ENCODE measurements at regions of chr9 and their contacts with region 1.

Region 1: DNA sequence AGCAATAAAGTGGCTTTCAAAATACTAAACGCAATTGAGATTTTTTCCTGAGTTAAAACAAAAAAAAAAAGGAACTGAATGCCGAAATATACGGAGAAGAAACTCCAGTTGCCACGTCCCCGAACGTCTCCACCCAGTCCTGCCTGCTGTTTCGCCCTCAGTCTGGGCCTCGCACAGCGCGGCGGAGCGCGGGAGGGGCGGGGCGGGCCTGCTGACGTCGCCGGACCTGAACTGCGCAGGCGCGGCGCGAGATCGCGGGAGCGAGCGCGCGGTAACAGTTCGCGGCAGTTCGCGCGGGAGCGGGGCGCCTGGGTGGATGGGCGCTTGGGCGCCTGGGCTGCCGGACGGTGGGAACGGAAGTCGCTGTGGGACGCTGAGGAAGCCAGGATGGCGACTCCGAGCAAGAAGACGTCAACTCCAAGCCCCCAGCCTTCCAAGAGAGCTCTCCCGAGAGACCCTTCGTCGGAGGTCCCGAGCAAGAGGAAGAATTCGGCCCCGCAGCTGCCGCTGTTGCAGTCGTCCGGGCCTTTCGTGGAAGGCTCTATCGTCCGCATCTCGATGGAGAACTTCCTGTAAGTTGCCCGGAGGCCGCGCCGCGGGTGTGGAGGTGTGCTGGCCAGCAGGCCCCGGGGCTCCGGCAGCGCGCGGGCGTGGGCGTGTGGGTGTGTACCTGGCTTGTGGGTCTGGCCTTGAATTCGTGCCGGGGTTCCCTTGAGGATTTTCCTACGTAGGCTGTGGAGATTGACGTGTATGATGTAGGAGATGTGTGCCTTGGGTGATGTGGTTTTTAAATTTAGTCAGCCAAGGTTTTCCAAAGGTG is at the start of gene SMC5:
- DNase-seq: peak; percentile 72 to 95
- H3K4me3 ChIP-seq: peak within 1 kb of the TSS; percentile 75
- H3K27ac ChIP-seq: peak within 1 kb of the TSS; percentile 89
- H3K4me1 ChIP-seq: peaks cover 68% of the 10 kb centered on the region
- H3K27me3 ChIP-seq: no peaks in the 10 kb centered on the region
- CTCF ChIP-seq: no peak
- total RNA-seq, gene SMC5: 34.4 and 41.9 TPM in 2 replicates

Region 2: GRCh38 chr9:69759421-69760277 is 499.3 kb before region 1 on chr9 and contains the start of gene PTAR1:
- CTCF ChIA-PET with region 1: no interaction called
- POLR2A ChIA-PET with region 1: no interaction called
- intact Hi-C with region 1: loop called (anchors 5 kb)
- DNase-seq: peak; percentile 61 to 92
- H3K4me3 ChIP-seq: peak within 1 kb of the TSS; percentile 67
- H3K27ac ChIP-seq: peak within 1 kb of the TSS; percentile 71
- H3K4me1 ChIP-seq: peaks cover 15% of the 10 kb centered on the region
- H3K27me3 ChIP-seq: no peaks in the 10 kb centered on the region
- CTCF ChIP-seq: no peak
- total RNA-seq, gene PTAR1: 44.9 and 47.3 TPM in 2 replicates

Region 3: DNA sequence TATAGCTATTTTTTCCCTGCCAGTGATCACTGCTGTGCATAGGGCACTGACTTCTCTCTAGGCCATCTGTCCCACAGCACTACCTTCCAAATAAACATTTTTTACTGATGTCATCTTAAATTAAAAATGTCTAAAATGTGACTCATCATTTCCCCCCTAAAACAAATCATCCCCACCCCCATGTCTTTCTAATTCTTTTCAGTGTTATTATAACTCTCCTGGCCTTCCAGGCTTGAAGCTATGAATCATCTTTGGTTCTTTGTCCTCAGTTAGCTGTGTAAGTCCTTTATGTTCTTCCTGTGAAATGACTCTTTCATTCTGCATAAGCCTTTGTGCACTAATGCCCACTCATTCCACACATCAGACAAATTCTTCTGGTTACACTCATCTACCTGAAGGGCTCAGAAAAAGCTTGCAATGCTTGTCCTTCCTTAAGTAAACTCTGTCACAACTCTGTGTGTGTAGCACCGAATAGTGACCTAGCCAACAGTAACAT is 360.1 kb before region 1 on chr9:
- CTCF ChIA-PET with region 1: no interaction called
- POLR2A ChIA-PET with region 1: no interaction called
- intact Hi-C with region 1: loop called (anchors 10 kb)
- DNase-seq: peak; percentile 29 to 95
- H3K4me3 ChIP-seq: no peak overlapping the region
- H3K27ac ChIP-seq: peak overlapping the region; percentile 78
- H3K4me1 ChIP-seq: peaks cover 45% of the 10 kb centered on the region
- H3K27me3 ChIP-seq: no peaks in the 10 kb centered on the region
- CTCF ChIP-seq: no peak

Region 4: DNA sequence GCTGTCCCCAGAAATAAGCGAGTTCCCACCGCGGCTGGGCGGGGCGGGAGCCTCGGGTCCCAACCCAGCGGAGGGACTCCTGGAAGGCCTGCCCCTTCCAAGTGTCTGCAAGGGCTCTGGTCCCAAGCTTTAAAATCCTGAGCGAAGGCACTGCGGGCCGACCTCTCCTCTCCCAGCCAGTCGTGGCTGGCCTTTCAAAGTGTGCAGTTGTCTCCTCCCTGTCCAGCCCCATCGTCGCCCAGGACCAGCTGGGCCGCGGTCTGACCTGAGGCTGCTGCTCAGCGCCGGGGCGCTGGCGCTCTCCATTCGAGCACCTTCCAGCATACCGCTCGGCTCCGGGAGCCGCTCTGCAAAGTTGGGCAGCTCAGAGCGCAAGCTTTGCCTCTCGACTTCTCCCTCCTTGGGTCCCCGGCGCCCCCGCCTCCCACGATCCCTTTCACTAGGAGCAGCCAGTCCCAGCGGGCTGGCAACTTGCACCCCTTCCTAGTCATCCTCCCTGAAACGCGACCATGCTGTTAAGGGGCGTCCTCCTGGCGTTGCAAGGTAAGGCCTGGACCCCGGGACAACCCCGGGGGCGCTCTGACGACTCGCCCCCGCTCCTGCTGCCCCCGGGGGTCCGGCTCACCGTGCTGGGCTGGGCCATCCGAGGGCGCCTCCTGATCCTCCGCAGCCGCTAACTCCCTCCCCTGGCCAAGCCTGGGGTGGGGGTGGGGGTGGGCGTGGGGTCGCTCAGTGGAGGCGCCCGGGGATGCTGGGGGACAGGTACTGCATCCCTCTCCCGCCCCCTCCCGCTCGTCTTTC is 215.0 kb before region 1 on chr9 and contains the start of gene MAMDC2:
- CTCF ChIA-PET with region 1: no interaction called
- POLR2A ChIA-PET with region 1: no interaction called
- intact Hi-C with region 1: loop called (anchors 5 kb)
- DNase-seq: peak in 1 of 2 experiments; percentile 39
- H3K4me3 ChIP-seq: peak within 1 kb of the TSS; percentile 66
- H3K27ac ChIP-seq: no peak within 1 kb of the TSS
- H3K4me1 ChIP-seq: peaks cover 3% of the 10 kb centered on the region
- H3K27me3 ChIP-seq: no peaks in the 10 kb centered on the region
- CTCF ChIP-seq: no peak
- total RNA-seq, gene MAMDC2: 1.7 and 2.7 TPM in 2 replicates

Region 5: GRCh38 chr9:70285246-70285645 is 26.3 kb after region 1 on chr9:
- CTCF ChIA-PET with region 1: no interaction called
- POLR2A ChIA-PET with region 1: no interaction called
- intact Hi-C with region 1: loop called (anchors 2 kb)
- DNase-seq: no peak
- H3K4me3 ChIP-seq: no peak overlapping the region
- H3K27ac ChIP-seq: no peak overlapping the region
- H3K4me1 ChIP-seq: no peaks in the 10 kb centered on the region
- H3K27me3 ChIP-seq: no peaks in the 10 kb centered on the region
- CTCF ChIP-seq: no peak